ENCODE measurements at regions of chr5 and their contacts with region 1.

Region 1: GRCh38 chr5:90409318-90410177 is at the start of gene CETN3:
- H3K4me3 ChIP-seq: peak within 1 kb of the TSS; percentile 89
- H3K27ac ChIP-seq: peak within 1 kb of the TSS; percentile 92
- H3K4me1 ChIP-seq: peaks cover 10% of the 10 kb centered on the region; the same call in 1 of the 2 replicates
- CTCF ChIP-seq: peak; percentile 72

Region 2: DNA sequence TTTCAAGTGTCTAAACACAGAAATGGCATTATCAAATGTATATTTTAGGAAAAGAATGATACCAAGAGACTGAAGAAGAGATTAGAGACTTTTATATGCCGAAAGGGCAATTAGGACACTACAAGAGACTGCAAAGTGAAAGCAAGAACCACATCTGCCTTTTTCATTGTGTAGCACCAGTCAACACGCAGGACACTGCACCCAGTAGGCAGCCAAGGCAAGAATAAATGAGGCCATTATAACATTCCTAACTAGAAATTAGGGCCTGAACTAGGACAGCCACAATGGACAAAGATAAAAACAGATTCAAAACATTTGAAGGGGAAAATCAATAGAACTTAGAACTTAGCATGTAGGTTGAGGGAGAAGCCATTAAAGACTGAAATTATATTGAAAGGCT is 10.8 kb before region 1 on chr5:
- CTCF ChIA-PET with region 1: interaction called, 3 read pairs
- POLR2A ChIA-PET with region 1: interaction called, 16 read pairs
- H3K4me3 ChIP-seq: no peak overlapping the region
- H3K27ac ChIP-seq: no peak overlapping the region
- H3K4me1 ChIP-seq: no peaks in the 10 kb centered on the region
- CTCF ChIP-seq: no peak

Region 3: DNA sequence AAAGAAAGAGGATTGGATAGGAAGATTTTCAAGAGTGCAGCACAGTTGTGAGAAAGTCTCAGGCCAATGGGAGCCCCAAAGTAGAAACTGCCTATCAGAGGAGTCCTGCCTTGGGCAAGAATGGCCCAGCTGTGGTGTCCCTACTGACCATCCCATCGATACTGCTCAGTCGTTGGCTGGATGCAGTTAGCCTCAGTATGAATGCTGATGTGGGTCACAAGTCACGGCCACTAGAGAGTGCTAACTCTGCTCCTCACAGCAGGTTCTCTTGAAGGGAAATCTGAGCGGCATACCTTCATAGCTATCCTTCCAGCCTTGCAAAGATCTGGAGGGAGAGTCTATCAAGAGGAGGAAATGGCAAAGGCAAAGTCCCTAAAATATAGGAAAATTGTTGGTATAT is 11.6 kb after region 1 on chr5:
- CTCF ChIA-PET with region 1: interaction called, 6 read pairs
- POLR2A ChIA-PET with region 1: interaction called, 10 read pairs
- H3K4me3 ChIP-seq: no peak overlapping the region
- H3K27ac ChIP-seq: no peak overlapping the region
- H3K4me1 ChIP-seq: no peaks in the 10 kb centered on the region
- CTCF ChIP-seq: peak; percentile 44

Region 4: DNA sequence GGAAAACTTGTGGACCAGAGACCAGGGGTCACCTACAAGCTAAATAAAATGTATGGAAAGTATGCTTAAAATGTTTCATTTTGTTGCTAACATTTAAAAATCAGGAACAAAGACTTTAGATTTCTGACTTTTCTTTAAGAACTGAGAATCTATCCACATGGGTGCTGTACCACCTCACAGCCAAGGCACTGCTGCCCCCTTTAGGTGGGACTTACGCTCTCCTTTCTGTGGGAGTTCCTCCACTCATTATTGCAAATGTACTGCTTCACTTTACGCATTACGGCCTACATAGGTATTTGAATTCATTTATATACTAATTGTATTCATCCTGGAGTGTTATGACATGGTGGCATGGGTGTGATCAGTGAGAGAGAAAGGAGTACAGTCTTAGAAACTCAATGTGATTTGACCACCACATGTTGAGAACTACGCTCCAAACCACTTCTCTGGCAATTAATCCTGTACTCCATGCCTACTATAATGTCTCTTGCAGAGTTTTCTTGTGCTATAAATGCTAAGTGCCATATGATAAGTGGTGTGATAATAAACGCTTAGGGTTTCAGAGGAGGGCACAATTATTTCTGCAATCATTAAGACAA is 24.7 kb after region 1 on chr5:
- CTCF ChIA-PET with region 1: no interaction called
- POLR2A ChIA-PET with region 1: interaction called, 10 read pairs
- H3K4me3 ChIP-seq: no peak overlapping the region
- H3K27ac ChIP-seq: no peak overlapping the region
- H3K4me1 ChIP-seq: peaks cover 10% of the 10 kb centered on the region
- CTCF ChIP-seq: no peak

Region 5: DNA sequence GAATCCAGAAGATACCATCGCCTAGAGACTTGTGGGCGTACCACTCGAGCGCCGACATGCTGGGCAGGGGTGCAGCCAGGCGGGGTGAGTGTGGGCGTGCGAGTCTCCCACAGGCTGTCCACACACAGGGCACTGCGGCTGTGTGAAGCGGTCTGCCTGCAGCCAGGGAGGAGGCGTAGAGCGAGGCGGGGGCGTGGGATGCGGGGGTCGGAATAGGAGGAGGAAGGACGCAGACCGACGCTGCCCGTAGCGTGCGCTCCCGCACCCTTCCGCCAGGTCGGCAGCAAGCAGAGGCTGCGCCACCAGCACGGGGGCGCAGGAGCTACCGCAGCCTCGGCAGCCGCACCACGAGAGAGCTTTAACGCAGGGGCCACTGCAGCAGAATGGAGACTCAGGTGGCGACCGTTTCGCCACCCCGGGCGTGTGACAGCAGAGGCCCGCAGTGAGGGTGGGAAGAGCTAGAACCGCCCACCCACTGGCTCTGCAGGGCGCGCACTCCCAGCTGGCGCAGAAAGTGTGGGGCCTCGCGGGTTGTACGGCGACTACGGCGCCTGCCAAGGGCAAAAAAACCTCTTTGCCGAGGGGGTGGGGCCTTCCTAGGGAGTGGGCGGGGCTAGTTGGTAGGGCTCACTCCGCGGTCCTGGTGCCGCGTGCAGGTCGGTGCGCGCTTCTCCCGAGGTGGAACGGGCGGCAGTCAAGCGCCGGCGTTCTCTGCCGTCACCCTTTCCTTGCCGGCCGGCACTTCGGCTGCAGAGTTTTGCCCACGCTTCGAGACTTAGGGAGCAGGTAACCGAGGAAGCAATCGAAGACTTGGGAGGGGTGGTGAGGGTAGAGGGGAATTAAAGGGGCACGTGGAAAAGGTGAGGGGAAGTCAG is 64.9 kb after region 1 on chr5 and contains the starts of genes MBLAC2 and POLR3G:
- CTCF ChIA-PET with region 1: no interaction called
- POLR2A ChIA-PET with region 1: interaction called, 15 read pairs
- H3K4me3 ChIP-seq: peak within 1 kb of the TSS; percentile 73
- H3K27ac ChIP-seq: peak within 1 kb of the TSS; percentile 76
- H3K4me1 ChIP-seq: no peaks in the 10 kb centered on the region
- CTCF ChIP-seq: peak; percentile 99

Region 6: GRCh38 chr5:90548069-90548593 is 138.6 kb after region 1 on chr5:
- CTCF ChIA-PET with region 1: no interaction called
- POLR2A ChIA-PET with region 1: interaction called, 18 read pairs
- H3K4me3 ChIP-seq: peak overlapping the region; percentile 11
- H3K27ac ChIP-seq: peak overlapping the region; percentile 92; the same call in 1 of the 2 replicates
- H3K4me1 ChIP-seq: peaks cover 13% of the 10 kb centered on the region
- CTCF ChIP-seq: no peak

Measured in HEK293 (cell line).